ENCODE measurements at regions of chr12 and their contacts with region 1.

Region 1: GRCh38 chr12:54126696-54127537 is 61.9 kb downstream of the SMUG1 start:
- DNase-seq: peak; percentile 88
- H3K4me3 ChIP-seq: peak overlapping the region; percentile 47 to 72 (median 60)
- H3K27ac ChIP-seq: peak overlapping the region; percentile 67 to 86 (median 74)
- H3K4me1 ChIP-seq: peaks cover 0 to 20% (median 11%) of the 10 kb centered on the region in 4 donors
- H3K27me3 ChIP-seq: peaks cover 4 to 42% (median 22%) of the 10 kb centered on the region in 3 donors
- CTCF ChIP-seq: no peak
- EP300 ChIP-seq: no peak
- POLR2A ChIP-seq: peak; percentile 19 to 44

Region 2: DNA sequence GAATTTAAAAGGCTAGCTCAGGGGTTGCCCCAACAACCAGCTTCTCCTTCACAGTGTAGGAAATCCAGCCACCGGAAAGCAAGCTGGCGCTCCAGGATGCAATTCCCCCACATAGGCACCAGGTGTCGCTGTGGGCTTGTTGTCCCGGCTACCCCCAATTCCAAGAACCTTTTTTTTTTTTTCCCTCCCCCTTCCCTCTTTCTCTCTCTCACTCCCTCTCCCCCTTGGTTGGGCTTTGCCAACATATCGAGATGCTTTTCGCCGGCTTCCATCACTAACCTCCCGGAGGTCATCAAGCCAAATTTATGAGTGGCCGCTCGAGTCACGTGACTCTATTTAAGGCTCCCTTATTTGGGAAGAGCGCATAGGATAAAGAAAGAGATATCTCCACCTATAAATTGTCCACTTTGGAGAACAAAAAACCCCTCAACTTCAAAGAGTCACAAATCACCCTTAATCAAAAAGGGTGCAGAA is 94.3 kb before region 1 on chr12 and contains the start of gene HOXC5:
- intact Hi-C with region 1: loop called (anchors 5 kb)
- DNase-seq: peak; percentile 87
- H3K4me3 ChIP-seq: peak within 1 kb of the TSS; percentile 7 to 49 (median 32)
- H3K27ac ChIP-seq: peak within 1 kb of the TSS in 3 of 4 donors; percentile 33 to 65 (median 44)
- H3K4me1 ChIP-seq: peaks cover 0 to 42% (median 34%) of the 10 kb centered on the region in 4 donors
- H3K27me3 ChIP-seq: peaks cover 54 to 100% (median 96%) of the 10 kb centered on the region in 3 donors
- CTCF ChIP-seq: peak; percentile 78 to 97 (median 88)
- EP300 ChIP-seq: no peak
- POLR2A ChIP-seq: no peak
- total RNA-seq, gene HOXC5: 1.4 TPM in 1 of 4 donors, not detected in the others

Region 3: DNA sequence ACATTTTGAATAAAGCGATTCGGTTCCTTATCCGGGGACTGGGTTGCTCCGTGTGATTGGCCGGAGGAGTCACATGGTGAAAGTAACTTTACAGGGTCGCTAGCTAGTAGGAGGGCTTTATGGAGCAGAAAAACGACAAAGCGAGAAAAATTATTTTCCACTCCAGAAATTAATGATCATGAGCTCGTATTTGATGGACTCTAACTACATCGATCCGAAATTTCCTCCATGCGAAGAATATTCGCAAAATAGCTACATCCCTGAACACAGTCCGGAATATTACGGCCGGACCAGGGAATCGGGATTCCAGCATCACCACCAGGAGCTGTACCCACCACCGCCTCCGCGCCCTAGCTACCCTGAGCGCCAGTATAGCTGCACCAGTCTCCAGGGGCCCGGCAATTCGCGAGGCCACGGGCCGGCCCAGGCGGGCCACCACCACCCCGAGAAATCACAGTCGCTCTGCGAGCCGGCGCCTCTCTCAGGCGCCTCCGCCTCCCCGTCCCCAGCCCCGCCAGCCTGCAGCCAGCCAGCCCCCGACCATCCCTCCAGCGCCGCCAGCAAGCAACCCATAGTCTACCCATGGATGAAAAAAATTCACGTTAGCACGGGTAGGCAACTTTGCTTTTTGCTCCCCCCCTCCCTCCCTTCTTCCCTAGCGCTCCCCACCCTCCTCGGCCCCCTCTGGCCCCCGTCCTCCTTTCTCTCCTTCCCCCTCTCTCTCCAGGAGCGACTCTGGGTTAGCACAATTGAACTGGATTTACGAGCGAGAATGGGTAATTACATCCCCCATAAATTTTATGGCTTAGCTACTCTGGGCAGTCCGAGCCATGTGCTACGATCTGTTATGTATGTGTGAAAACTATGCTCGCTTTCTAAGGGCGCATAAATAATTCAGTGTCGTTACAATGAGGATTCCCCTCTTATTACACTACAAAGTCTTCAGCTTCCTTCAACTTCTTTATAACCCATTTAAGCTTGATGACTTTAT is 72.9 kb before region 1 on chr12 and contains the start of gene HOXC4:
- intact Hi-C with region 1: loop called (anchors 5 kb)
- DNase-seq: no peak
- H3K4me3 ChIP-seq: peak within 1 kb of the TSS; percentile 40 to 61 (median 52)
- H3K27ac ChIP-seq: peak within 1 kb of the TSS; percentile 58 to 69 (median 62)
- H3K4me1 ChIP-seq: peaks cover 0 to 41% (median 35%) of the 10 kb centered on the region in 4 donors
- H3K27me3 ChIP-seq: peaks cover 28 to 72% (median 56%) of the 10 kb centered on the region in 3 donors
- CTCF ChIP-seq: no peak
- EP300 ChIP-seq: no peak
- POLR2A ChIP-seq: no peak
- total RNA-seq, gene HOXC4: 0.66 to 1.2 (median 0.71) TPM in 3 of 4 donors, not detected in the other

Region 4: GRCh38 chr12:54082397-54082892 is 44.5 kb before region 1 on chr12:
- intact Hi-C with region 1: loop called (anchors 5 kb)
- DNase-seq: peak; percentile 73
- H3K4me3 ChIP-seq: peak overlapping the region in 3 of 4 donors; percentile 35 to 42 (median 36)
- H3K27ac ChIP-seq: peak overlapping the region; percentile 72 to 90 (median 81)
- H3K4me1 ChIP-seq: peaks cover 0 to 15% (median 4%) of the 10 kb centered on the region in 4 donors
- H3K27me3 ChIP-seq: no peaks in the 10 kb centered on the region
- CTCF ChIP-seq: no peak
- EP300 ChIP-seq: no peak
- POLR2A ChIP-seq: no peak

Measured in sigmoid colon (tissue), 7 donors.